Heart left ventricle (tissue), 16 donors: ENCODE measurements at regions of chr11 and their contacts with region 1.

Region 1: GRCh38 chr11:131867457-131868257 is 497.2 kb downstream of the NTM start:
- DNase-seq: peak; percentile 64 to 81 (median 71)
- ATAC-seq: peak; percentile 42 to 91 (median 78)
- H3K4me3 ChIP-seq: no peak overlapping the region
- H3K27ac ChIP-seq: no peak overlapping the region
- H3K4me1 ChIP-seq: no peaks in the 10 kb centered on the region
- H3K27me3 ChIP-seq: peaks cover 0 to 2% (median 0%) of the 10 kb centered on the region in 9 donors
- CTCF ChIP-seq: peak; percentile 32 to 74 (median 64)
- POLR2A ChIP-seq: no peak

Region 2: DNA sequence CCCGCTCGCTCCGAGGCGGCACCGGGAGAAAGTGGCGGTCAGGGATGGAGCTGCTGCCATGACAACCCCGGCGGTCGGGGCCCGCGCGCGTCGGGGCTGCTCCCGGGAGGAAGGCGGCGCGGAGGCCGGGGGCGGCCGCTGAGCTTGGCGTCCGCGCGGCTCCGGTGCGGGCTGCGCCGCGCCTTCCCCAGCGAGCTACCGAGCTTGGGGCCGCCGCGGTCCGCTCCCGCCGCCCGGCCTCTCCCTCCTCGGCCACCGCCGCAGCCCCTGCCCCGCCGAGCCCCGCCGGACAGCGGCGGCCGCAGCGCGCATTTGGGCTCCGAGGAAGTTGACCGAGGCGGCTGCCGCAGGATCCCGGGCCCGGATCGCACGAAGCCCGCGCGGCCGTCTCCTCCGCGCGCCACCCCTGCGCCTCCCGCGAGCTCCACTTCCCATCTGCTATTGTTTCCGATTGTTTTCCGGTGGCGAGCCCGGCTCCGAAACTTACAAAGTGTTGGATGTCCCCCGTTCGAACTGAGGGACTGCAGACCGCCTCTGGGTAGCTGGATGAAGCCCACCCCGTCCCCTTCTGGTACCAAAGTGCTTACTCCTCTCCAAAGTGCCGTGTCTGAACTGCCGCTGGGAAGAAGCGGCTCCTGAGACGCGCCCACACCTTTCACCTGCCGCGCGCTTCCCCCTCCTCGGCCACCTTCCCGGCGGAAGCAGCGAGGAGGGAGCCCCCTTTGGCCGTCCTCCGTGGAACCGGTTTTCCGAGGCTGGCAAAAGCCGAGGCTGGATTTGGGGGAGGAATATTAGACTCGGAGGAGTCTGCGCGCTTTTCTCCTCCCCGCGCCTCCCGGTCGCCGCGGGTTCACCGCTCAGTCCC is 43.1 kb after region 1 on chr11:
- intact Hi-C with region 1: loop called in 1 of 10 experiments (anchors 5 kb)
- DNase-seq: no peak
- ATAC-seq: peak in 3 of 4 donors; percentile 15 to 57 (median 49)
- H3K4me3 ChIP-seq: peak overlapping the region; percentile 6 to 64 (median 48)
- H3K27ac ChIP-seq: peak overlapping the region in 4 of 12 donors; percentile 27 to 51 (median 46)
- H3K4me1 ChIP-seq: peaks cover 0 to 17% (median 0%) of the 10 kb centered on the region in 12 donors
- H3K27me3 ChIP-seq: peaks cover 9 to 76% (median 14%) of the 10 kb centered on the region in 9 donors
- CTCF ChIP-seq: no peak
- POLR2A ChIP-seq: no peak

Region 3: DNA sequence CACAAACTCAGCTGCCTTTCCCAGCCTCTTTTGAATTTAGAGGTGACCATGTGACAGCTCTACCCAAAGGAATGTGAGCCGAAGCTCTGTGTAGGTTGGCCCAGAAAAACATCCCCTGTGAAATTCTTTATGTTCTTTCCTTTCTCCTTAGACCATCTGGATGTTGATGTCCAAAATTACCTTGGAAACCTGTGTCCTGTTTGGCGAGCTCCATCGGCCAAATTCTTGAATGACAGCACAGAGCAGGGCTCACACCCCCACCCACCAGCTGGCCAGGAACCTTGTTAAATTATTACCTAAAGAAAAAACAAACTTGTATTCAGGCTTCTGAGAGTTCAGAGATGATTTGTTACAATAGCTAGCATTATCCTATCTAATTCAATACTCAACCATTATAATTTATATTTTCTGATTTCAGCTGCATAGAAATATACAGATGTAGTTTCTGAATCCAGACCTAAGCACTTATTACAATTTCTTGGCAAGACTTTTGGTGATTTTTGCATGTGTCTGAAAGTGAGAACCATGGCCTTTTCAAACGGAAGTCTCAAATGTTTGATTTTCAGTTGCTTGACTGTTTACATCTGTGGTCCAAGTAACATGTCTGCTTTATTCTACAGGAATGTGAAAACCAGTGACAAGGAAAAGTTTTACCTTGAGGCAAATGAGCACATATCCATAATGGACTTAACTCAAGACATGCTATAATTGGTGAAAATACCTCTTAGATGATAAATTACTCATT is 57.0 kb after region 1 on chr11:
- intact Hi-C with region 1: no loop called
- DNase-seq: no peak
- ATAC-seq: no peak
- H3K4me3 ChIP-seq: no peak overlapping the region
- H3K27ac ChIP-seq: no peak overlapping the region
- H3K4me1 ChIP-seq: peaks cover 0 to 9% (median 0%) of the 10 kb centered on the region in 12 donors
- H3K27me3 ChIP-seq: no peaks in the 10 kb centered on the region
- CTCF ChIP-seq: no peak
- POLR2A ChIP-seq: no peak

Region 4: DNA sequence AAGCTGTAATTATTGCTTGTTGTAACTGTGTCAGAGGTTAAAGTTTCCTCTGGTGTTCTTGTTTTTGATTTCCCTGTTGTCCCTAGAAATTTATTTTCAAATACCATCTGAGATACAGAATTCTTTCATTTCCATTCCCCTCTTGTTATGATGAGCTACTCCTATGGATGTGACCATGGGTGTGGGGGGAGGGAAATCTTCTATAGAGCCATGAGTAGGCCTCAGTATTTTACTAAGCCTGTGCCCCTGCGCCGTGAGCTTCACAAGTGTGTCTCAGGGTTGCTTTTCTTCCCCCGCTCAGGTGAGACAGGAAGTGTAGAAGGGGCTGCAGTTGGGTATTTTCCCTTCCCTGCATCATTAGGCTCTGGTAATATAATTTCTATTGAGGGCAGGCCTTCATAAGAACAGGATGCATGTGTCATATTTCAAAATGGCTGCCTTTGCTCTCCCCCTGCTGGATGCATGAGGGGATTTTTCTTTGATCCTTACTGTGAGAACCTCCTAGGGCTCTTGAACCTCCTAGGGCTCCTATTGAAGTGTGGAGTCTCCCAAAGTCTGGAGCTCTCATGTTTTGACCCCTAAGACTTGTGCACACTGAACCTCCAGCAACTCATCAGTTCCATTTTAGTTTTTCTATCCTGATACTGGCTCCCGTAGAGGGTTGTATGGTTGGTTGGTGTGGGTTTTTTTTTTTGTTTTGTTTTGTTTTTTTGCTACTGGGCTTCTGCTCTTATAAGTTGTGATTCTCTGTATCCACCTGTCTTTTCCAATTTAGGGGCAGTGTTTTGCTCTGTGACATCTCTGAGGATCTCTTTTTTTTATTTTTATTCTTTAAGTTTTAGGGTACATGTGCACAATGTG is 161.0 kb after region 1 on chr11:
- intact Hi-C with region 1: loop called in 5 of 10 experiments (anchors 1 to 10 kb)
- DNase-seq: peak in 1 of 5 donors; percentile 56
- ATAC-seq: peak in 1 of 4 donors; percentile 83
- H3K4me3 ChIP-seq: no peak overlapping the region
- H3K27ac ChIP-seq: no peak overlapping the region
- H3K4me1 ChIP-seq: peaks cover 0 to 11% (median 2%) of the 10 kb centered on the region in 12 donors
- H3K27me3 ChIP-seq: no peaks in the 10 kb centered on the region
- CTCF ChIP-seq: peak in 9 of 12 donors; percentile 23 to 63 (median 44)
- POLR2A ChIP-seq: no peak

Region 5: DNA sequence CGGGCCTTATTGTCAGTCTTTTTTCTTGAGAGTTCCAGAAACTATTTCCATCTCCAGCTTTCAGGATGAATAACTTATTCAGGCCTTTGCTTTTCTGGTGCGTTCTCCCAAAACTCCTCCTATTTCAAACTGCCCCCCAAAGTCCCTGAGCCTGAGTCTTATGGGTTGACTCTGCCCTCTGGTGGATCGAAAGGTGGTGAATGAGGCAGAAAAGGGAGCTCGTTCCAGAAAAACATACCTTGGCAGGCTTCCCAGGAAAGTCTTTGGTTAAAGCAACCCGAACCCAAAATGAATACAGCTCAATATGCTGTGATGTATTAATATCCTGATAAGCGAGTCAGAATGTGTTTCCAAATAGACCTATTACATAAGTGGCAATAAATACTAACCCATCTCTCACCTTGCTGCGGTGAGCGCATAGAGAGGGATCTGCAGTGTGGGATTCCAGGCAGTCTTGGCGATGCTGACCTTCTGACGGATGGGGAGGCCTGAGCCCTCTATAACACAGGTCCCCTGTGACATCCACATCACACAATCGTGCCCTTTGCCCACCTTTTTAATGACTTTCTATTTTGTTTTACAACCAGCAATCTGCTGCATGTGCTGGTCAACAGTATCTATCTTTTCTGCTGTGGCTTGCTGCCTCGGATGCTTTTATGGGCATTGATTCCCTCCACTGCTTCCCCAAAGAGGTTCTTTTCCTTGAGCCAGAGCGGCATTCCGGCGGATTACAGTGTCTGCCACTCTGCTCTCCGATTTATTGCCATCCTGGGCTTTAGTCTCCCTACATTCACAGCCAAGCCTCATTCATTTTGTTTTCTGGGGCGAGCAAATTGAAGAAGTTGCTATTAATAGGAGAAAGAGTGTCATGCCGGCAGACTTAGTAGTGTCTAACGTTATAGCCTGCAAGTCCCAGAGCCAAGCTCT is 259.6 kb after region 1 on chr11:
- intact Hi-C with region 1: loop called in 8 of 10 experiments (anchors 2 to 10 kb)
- DNase-seq: peak in 4 of 5 donors; percentile 42 to 63 (median 57)
- ATAC-seq: peak in 3 of 4 donors; percentile 54 to 74 (median 72)
- H3K4me3 ChIP-seq: peak overlapping the region in 9 of 12 donors; percentile 10 to 53 (median 39)
- H3K27ac ChIP-seq: peak overlapping the region in 7 of 12 donors; percentile 2 to 51 (median 37)
- H3K4me1 ChIP-seq: peaks cover 0 to 19% (median 13%) of the 10 kb centered on the region in 12 donors
- H3K27me3 ChIP-seq: peaks cover 0 to 6% (median 0%) of the 10 kb centered on the region in 9 donors
- CTCF ChIP-seq: peak; percentile 22 to 68 (median 44)
- POLR2A ChIP-seq: no peak

Region 6: GRCh38 chr11:132402071-132402684 is 534.5 kb after region 1 on chr11:
- intact Hi-C with region 1: loop called (anchors 5 to 10 kb)
- DNase-seq: peak in 4 of 5 donors; percentile 16 to 52 (median 35)
- ATAC-seq: peak; percentile 77 to 93 (median 86)
- H3K4me3 ChIP-seq: no peak overlapping the region
- H3K27ac ChIP-seq: no peak overlapping the region
- H3K4me1 ChIP-seq: no peaks in the 10 kb centered on the region
- H3K27me3 ChIP-seq: peaks cover 0 to 28% (median 0%) of the 10 kb centered on the region in 9 donors
- CTCF ChIP-seq: peak in 11 of 12 donors; percentile 27 to 59 (median 45)
- POLR2A ChIP-seq: no peak

Region 7: DNA sequence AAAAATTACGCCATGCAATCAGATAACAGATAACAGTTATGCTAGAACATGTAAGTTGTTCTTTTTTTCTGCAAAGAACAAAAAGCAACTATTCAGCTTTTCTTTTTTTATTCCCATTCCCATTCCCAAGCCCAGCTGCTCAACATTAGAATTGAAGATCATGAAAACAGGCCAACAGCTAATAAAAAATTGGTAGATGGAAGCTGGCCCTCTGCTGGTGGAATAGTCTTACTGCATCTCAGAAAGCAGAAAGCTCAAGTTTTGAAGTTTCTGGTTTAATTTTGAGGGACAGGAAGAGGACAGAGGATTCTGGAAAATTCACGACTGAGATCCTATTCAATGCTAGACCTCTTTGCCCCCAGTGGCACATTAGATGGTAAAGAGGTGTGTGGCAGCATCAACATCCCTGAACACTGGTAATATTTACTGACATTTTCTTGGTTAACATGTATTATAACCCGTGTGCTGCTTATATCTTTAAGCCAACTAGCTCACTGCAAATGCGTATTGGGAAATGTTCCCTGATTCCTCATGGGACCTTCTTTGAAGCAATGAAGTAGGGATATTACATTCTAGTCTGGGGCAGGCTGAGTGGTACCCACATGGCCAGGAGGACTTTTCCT is 1073.5 kb after region 1 on chr11:
- intact Hi-C with region 1: loop called in 2 of 10 experiments (anchors 5 to 10 kb)
- DNase-seq: no peak
- ATAC-seq: no peak
- H3K4me3 ChIP-seq: no peak overlapping the region
- H3K27ac ChIP-seq: no peak overlapping the region
- H3K4me1 ChIP-seq: peaks cover 0 to 15% (median 0%) of the 10 kb centered on the region in 12 donors
- H3K27me3 ChIP-seq: peaks cover 8 to 41% (median 32%) of the 10 kb centered on the region in 9 donors
- CTCF ChIP-seq: peak; percentile 65 to 86 (median 77)
- POLR2A ChIP-seq: no peak

Region 8: GRCh38 chr11:133064152-133064877 is 1196.7 kb after region 1 on chr11:
- intact Hi-C with region 1: loop called in 3 of 10 experiments (anchors 5 to 10 kb)
- DNase-seq: peak; percentile 56 to 91 (median 83)
- ATAC-seq: peak; percentile 93 to 97 (median 94)
- H3K4me3 ChIP-seq: peak overlapping the region; percentile 14 to 70 (median 62)
- H3K27ac ChIP-seq: peak overlapping the region in 9 of 12 donors; percentile 36 to 75 (median 69)
- H3K4me1 ChIP-seq: peaks cover 0 to 14% (median 1%) of the 10 kb centered on the region in 12 donors
- H3K27me3 ChIP-seq: peaks cover 0 to 11% (median 0%) of the 10 kb centered on the region in 9 donors
- CTCF ChIP-seq: peak; percentile 57 to 79 (median 66)
- POLR2A ChIP-seq: no peak